B cell (primary cell): ENCODE measurements at regions of chr9 and their contacts with region 1.

Region 1: DNA sequence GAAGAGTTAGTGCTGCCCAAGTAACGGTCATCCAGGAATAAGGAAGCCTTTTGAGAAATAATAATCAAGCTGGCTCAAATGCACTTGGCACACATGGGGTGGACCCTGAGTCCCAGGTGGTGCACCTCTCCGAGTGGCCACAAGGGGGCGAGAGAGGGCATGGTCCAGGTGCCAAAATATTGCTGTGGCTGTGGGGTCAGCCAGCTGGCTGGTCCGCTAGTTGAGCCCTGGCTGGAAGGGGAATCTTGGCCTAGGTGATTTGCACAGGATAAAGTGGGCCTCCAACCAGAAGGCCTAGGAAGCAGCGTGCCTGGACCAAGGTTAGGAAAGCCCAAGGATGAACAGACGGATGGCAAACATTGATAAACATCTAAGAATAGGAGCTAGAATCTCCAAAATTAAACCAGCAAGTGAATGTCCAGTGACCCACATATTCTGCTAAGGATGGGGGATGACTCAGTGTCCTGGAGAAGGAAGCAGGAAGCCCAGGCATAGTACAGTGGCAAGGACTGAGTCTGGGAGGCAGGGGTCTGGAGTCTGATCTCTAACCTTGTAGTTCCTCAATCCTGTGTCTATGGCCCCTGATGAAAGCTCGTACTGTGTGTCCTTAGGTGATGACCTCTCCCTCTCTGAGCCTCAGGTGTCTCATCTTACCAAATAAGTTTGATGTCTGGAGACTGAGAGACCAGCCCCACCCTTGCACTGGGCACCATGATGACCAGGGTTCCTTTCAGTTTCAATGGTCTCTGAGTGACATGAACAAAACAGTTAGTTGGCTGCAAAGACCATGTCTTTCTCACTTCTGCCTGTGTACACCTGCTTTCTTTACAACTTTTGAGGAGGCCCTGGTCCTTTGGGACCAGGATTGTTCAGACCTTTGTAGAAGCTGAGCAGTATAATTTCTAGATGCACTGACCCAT is 19.2 kb upstream of the SHB start:
- DNase-seq: peak; percentile 68
- ATAC-seq: peak; percentile 80
- H3K4me3 ChIP-seq: no peak overlapping the region
- H3K4me3 Mint-ChIP-seq: no peak overlapping the region
- H3K27ac ChIP-seq: no peak overlapping the region
- H3K27ac Mint-ChIP-seq: no peak overlapping the region
- H3K4me1 ChIP-seq: no peaks in the 10 kb centered on the region
- H3K4me1 Mint-ChIP-seq: no peaks in the 10 kb centered on the region
- H3K27me3 ChIP-seq: peaks cover 0 to 7% (median 0%) of the 10 kb centered on the region in 4 experiments
- H3K27me3 Mint-ChIP-seq: peaks cover 24% of the 10 kb centered on the region
- CTCF ChIP-seq: peak; percentile 98

Region 2: GRCh38 chr9:37840560-37841194 is 247.6 kb before region 1 on chr9:
- CTCF ChIA-PET with region 1: no interaction called
- POLR2A ChIA-PET with region 1: no interaction called
- intact Hi-C with region 1: no loop called
- DNase-seq: no peak
- ATAC-seq: no peak
- H3K4me3 ChIP-seq: no peak overlapping the region
- H3K4me3 Mint-ChIP-seq: no peak overlapping the region
- H3K27ac ChIP-seq: no peak overlapping the region
- H3K27ac Mint-ChIP-seq: no peak overlapping the region
- H3K4me1 ChIP-seq: no peaks in the 10 kb centered on the region
- H3K4me1 Mint-ChIP-seq: no peaks in the 10 kb centered on the region
- H3K27me3 ChIP-seq: no peaks in the 10 kb centered on the region
- H3K27me3 Mint-ChIP-seq: no peaks in the 10 kb centered on the region
- CTCF ChIP-seq: no peak

Region 3: DNA sequence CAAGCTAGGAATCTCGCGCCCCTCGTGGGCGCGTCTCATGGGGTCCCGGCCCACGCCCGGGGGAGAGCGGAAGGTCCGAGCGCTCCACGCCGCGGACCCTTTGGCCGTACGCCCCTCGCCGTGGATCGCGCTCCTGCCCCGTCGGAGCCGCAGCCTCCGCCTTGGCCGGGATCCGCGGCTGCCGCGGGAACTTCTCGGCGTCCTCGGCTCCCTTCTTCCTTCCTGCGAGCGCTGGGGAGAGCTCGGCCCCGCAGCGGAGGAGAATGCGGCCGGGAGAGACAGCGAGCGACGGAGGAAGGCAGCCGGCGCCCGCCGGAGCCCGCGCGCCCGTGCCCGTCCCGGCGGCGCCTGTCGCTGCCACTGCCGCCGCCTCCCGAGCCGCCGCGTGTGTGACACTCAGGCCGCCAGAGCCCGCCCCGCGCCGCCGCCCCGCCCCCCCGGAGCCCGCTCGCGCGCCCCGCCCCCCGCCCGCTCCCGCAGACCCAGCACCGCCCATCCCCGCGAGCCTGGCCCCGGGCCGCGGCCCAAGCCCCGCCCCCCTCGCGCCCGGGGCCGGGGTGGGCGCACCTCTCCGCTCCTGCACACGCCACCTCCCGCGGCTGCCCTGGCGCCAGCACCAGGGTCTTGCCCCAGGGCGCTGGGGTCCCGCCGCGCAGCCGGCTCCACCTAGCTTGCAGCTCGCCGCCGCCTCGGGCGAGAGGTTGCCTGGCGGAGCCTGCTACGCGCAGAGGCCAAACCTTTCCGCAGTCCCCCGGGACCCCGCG is 19.2 kb before region 1 on chr9 and contains the start of gene SHB:
- CTCF ChIA-PET with region 1: interaction called, 24 read pairs
- POLR2A ChIA-PET with region 1: no interaction called
- intact Hi-C with region 1: no loop called
- DNase-seq: peak; percentile 89
- ATAC-seq: peak; percentile 84
- H3K4me3 ChIP-seq: peak within 1 kb of the TSS; percentile 55 to 85 (median 78)
- H3K4me3 Mint-ChIP-seq: peak within 1 kb of the TSS; percentile 93
- H3K27ac ChIP-seq: no peak within 1 kb of the TSS
- H3K27ac Mint-ChIP-seq: no peak within 1 kb of the TSS
- H3K4me1 ChIP-seq: peaks cover 19 to 22% of the 10 kb centered on the region in 2 donors
- H3K4me1 Mint-ChIP-seq: peaks cover 19% of the 10 kb centered on the region
- H3K27me3 ChIP-seq: peaks cover 0 to 34% (median 14%) of the 10 kb centered on the region in 4 experiments
- H3K27me3 Mint-ChIP-seq: peaks cover 34% of the 10 kb centered on the region
- CTCF ChIP-seq: no peak
- total RNA-seq, gene SHB: 1.5 and 1.9 TPM in 2 replicates

Region 4: GRCh38 chr9:38251036-38251860 is 163.0 kb after region 1 on chr9:
- CTCF ChIA-PET with region 1: no interaction called
- POLR2A ChIA-PET with region 1: no interaction called
- intact Hi-C with region 1: no loop called
- DNase-seq: no peak
- ATAC-seq: no peak
- H3K4me3 ChIP-seq: no peak overlapping the region
- H3K4me3 Mint-ChIP-seq: no peak overlapping the region
- H3K27ac ChIP-seq: no peak overlapping the region
- H3K27ac Mint-ChIP-seq: no peak overlapping the region
- H3K4me1 ChIP-seq: no peaks in the 10 kb centered on the region
- H3K4me1 Mint-ChIP-seq: no peaks in the 10 kb centered on the region
- H3K27me3 ChIP-seq: no peaks in the 10 kb centered on the region
- H3K27me3 Mint-ChIP-seq: peaks cover 10% of the 10 kb centered on the region
- CTCF ChIP-seq: no peak